Left ventricle myocardium superior (tissue), 1 donor: ENCODE measurements at regions of chr14 and their contacts with region 1.

Region 1: GRCh38 chr14:20855652-20856291 is 35.4 kb upstream of the RNASE3 start:
- DNase-seq: peak; percentile 36
- ATAC-seq: peak; percentile 93

Region 2: GRCh38 chr14:20697273-20698017 is 158.3 kb before region 1 on chr14:
- intact Hi-C with region 1: loop called (anchors 5 kb)
- DNase-seq: peak; percentile 62
- ATAC-seq: peak; percentile 82

Region 3: DNA sequence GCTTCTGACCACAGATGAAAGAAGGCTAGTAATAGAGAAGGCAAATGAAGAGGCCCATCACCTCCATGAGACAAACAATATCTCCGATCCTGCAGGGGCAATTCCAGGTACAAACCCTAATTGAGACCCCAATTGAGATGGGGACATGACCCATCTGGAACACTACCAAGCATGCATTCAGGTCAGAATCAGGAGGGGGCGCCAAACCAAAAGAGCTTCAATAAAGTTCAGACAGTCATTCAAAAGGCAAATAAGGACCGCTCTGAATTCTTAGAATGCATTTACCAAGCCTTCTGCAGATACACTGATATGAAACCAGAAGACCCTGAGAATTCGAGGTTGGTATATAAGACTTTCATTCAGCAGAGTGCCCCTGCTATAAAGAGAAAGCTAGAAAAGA is 97.8 kb before region 1 on chr14:
- intact Hi-C with region 1: loop called (anchors 10 kb)
- DNase-seq: peak; percentile 31
- ATAC-seq: no peak